Caco-2 (cell line): ENCODE measurements at regions of chr17 and their contacts with region 1.

Region 1: DNA sequence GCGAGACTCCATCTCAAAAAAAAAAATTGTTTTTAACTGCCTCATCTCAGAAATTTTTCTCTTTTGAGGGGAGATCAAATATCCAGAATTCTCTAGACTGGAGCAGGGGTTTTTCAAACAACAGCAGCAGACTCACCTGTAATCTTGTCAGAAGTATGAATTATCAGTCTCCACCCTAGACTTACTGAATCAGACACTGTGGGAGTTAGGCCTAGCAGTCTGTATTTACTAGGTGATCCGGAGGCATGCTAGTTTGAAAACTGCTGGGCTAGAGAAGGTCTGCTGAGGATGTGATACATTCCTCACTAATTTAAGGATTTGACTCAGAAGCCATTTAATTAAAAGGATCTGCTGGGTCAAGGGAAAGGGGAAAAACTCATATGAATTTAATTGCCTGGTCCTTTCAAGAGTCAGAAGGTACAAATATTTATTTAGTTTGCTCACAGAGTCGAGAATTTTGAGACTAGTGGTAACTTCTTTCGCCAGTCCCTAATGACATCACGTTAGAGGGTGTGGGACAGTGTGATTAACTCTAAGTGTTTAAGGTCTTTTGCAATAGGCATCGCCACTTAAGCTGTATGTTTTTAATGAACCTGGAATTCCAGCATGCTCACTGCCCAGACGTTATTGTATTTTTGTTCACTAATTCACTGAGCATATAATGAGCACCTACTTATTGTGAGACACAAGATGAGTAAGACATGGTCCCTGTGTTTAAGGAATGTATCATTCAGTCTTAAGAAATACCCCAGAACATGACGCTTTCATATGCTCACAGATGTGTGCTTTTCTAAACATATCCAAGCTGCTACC is 14.2 kb downstream of the ATP6V0A1 start:
- DNase-seq: no peak
- H3K4me3 ChIP-seq: no peak overlapping the region
- H3K4me3 Mint-ChIP-seq: no peak overlapping the region
- H3K27ac Mint-ChIP-seq: no peak overlapping the region
- H3K4me1 ChIP-seq: peaks cover 21% of the 10 kb centered on the region
- H3K4me1 Mint-ChIP-seq: peaks cover 22% of the 10 kb centered on the region
- H3K27me3 ChIP-seq: no peaks in the 10 kb centered on the region
- H3K27me3 Mint-ChIP-seq: no peaks in the 10 kb centered on the region
- CTCF ChIP-seq: no peak

Region 2: GRCh38 chr17:42493319-42493718 is 20.4 kb after region 1 on chr17:
- CTCF ChIA-PET with region 1: no interaction called
- POLR2A ChIA-PET with region 1: interaction called, 18 read pairs
- intact Hi-C with region 1: no loop called
- DNase-seq: no peak
- H3K4me3 ChIP-seq: no peak overlapping the region
- H3K4me3 Mint-ChIP-seq: no peak overlapping the region
- H3K27ac Mint-ChIP-seq: no peak overlapping the region
- H3K4me1 ChIP-seq: no peaks in the 10 kb centered on the region
- H3K4me1 Mint-ChIP-seq: no peaks in the 10 kb centered on the region
- H3K27me3 ChIP-seq: no peaks in the 10 kb centered on the region
- H3K27me3 Mint-ChIP-seq: no peaks in the 10 kb centered on the region
- CTCF ChIP-seq: no peak